ENCODE measurements at regions of chrX and their contacts with region 1.

Region 1: DNA sequence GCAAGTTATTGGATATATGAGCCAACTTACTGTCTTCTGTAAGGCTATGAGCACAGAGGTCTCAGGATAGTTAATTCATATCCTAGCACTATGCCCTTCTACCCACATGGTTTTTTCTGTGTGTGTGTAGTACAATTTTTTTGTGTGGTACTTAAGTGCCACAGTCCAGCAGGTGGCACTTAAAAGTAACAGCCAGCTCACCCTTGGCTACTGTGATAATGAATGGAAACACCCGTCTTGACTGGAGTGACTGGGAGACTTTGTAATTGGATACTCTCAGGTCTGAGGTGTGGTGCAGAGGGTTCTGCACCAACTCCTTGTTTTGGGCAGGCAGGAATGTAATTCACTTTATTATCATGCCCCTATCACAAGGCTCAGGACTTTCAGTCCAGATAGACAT is 453.2 kb upstream of the CT83 start:
- DNase-seq: no peak
- H3K4me3 ChIP-seq: no peak overlapping the region
- H3K27me3 ChIP-seq: no peaks in the 10 kb centered on the region
- CTCF ChIP-seq: no peak

Region 2: GRCh38 chrX:115968436-115969252 is 947.3 kb before region 1 on chrX:
- CTCF ChIA-PET with region 1: no interaction called
- POLR2A ChIA-PET with region 1: no interaction called
- DNase-seq: no peak
- H3K4me3 ChIP-seq: peak overlapping the region; percentile 36
- H3K27me3 ChIP-seq: no peaks in the 10 kb centered on the region
- CTCF ChIP-seq: no peak

Region 3: DNA sequence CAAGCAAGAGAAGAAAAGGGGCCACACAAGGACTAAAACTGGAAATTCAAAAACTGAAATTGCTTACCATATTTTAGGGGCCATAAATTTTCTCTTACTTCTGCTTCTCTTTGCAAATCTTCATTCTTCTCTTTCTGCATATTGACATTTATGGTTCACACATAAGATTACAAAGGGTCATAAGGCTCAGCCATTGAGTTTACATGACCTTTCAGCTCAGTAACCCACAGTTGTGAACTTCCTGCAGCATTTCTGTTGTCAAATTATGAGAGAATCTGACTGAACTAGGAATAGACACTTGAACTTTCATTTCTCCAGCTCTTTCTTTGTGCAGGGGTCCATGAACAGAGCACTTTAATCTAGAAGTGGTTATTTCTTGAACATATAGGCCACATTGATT is 18.4 kb before region 1 on chrX:
- CTCF ChIA-PET with region 1: no interaction called
- POLR2A ChIA-PET with region 1: interaction called, 10 read pairs
- DNase-seq: no peak
- H3K4me3 ChIP-seq: no peak overlapping the region
- H3K27me3 ChIP-seq: no peaks in the 10 kb centered on the region
- CTCF ChIP-seq: no peak

Region 4: DNA sequence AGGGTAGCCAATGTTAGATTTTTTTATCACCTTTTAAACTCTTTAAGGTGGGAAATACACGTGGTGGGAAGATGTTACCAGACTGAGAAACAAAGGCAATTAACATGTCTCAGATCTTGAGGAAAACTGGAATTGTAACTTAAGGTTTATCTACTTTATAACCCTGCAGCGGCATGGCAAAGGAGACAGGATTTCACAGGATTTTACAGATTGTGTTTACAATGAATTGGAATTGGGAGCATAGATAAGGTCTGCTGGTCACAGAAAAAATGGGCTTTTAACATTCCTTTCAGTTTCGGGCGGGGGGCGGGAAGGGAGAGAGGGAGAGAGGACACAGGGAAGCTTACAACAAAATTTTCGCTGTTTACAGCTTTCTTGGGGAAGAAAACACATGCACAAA is 14.3 kb after region 1 on chrX:
- CTCF ChIA-PET with region 1: no interaction called
- POLR2A ChIA-PET with region 1: no interaction called
- DNase-seq: no peak
- H3K4me3 ChIP-seq: no peak overlapping the region
- H3K27me3 ChIP-seq: no peaks in the 10 kb centered on the region
- CTCF ChIP-seq: no peak

Measured in BJ (cell line).